ENCODE measurements at regions of chr2 and their contacts with region 1.

Region 1: DNA sequence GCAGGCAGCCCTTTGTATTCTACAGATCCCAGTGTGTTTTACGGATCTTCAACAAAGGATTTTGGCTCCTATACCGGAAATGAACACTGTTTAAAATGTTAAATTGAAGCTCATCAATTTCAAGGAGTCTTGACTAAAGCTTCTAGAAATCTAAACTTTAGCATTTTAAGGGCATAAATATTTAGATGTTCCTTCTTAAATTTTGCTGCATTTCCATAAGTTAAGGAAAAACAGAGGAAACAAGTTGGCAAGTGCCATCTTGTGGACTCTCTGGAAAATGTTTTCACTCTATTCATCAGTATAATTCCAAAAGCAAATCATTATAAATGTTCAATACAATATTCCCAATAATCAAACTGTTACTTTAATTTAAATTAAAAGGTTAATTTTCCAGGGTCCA is 19.6 kb downstream of the CHN1 start:
- DNase-seq: no peak
- H3K4me3 ChIP-seq: no peak overlapping the region
- H3K27ac ChIP-seq: no peak overlapping the region
- H3K4me1 ChIP-seq: no peaks in the 10 kb centered on the region
- H3K27me3 ChIP-seq: no peaks in the 10 kb centered on the region
- CTCF ChIP-seq: peak in 1 of 3 experiments; percentile 49

Region 2: DNA sequence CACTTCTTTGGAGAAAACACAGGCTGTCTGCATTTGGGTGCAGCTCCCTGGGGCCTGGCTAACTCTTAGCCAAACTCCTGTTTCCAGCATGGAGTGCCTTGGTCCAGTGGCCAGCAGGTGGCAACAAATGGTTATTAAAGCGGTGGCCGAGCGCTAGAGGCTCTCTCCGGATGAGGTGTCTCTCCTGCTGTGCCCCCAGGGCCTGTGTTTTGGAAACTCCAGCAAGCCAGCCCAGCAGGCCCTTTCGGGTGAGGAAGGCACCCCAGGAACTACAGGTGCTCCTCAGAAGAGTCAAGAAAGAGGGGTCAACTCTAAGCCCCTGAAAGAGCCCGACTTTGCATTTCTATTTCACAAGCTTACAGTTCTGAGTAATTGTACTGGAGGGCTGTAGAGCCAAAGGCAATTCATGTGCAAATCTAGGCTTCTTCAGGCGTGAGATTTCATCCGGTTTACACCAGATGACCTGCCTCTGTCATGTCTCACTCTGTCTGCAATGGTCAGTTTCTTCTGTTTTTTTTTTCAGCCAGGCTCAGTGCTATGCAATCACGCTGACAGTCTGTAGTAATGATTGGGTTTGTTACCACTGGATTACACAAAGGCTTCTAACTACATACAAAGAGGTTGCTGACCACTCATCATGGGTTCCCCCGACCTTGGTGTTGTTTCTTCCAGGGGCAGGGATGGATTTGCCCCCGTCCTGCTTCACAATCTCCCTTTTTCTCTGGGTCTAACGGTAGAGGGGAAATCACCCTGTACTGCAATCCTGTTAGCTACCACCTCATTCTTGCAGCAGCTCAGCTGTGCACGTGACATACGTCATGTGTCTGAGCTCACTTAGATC is 213.8 kb before region 1 on chr2:
- intact Hi-C with region 1: loop called (anchors 1 kb)
- DNase-seq: peak in 1 of 2 donors; percentile 80
- H3K4me3 ChIP-seq: peak overlapping the region in 1 of 2 donors; percentile 36
- H3K27ac ChIP-seq: peak overlapping the region in 1 of 2 donors; percentile 12
- H3K4me1 ChIP-seq: peaks cover 0 to 7% of the 10 kb centered on the region in 2 donors
- H3K27me3 ChIP-seq: no peaks in the 10 kb centered on the region
- CTCF ChIP-seq: peak; percentile 71 to 87 (median 75)

Region 3: GRCh38 chr2:174835797-174836255 is 149.8 kb before region 1 on chr2:
- intact Hi-C with region 1: no loop called
- DNase-seq: no peak
- H3K4me3 ChIP-seq: no peak overlapping the region
- H3K27ac ChIP-seq: no peak overlapping the region
- H3K4me1 ChIP-seq: no peaks in the 10 kb centered on the region
- H3K27me3 ChIP-seq: no peaks in the 10 kb centered on the region
- CTCF ChIP-seq: no peak

Region 4: DNA sequence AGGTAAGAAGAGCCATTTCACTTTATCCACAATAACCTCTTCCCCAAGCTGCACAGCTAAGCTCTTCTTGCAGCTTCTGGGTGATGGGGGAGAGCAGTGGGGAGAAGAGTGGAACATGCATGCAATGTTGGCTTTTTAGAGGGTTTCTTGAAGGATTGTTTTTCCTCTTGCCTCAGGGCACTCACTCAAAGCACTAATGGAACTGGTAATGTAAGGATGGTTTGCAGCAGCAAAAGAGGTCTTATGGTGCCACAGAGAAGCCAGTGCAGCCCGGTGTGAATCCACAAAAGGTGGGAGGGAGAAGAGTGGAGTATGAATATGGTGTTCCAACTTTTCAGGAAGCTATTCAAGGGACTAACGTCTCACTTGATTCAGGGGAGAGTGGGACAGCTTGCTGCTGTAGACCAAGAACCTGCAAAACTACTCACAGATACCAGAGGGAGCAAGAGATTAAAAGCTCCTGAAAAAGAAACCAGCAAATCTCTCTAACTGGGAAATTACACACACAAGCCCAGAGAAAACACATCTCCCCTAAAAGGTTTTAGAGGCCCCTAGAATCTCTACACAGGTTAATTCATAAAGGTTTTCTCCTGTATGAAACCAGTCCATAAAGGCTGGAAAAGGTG is 96.9 kb before region 1 on chr2:
- intact Hi-C with region 1: no loop called
- DNase-seq: no peak
- H3K4me3 ChIP-seq: no peak overlapping the region
- H3K27ac ChIP-seq: no peak overlapping the region
- H3K4me1 ChIP-seq: no peaks in the 10 kb centered on the region
- H3K27me3 ChIP-seq: no peaks in the 10 kb centered on the region
- CTCF ChIP-seq: no peak